ENCODE measurements at regions of chr1 and their contacts with region 1.

Region 1: GRCh38 chr1:25204797-25205480 is 27.4 kb downstream of the SYF2 start:
- DNase-seq: peak in 1 of 2 donors; percentile 26
- ATAC-seq: no peak
- H3K4me3 ChIP-seq: no peak overlapping the region
- H3K27ac ChIP-seq: no peak overlapping the region
- H3K4me1 ChIP-seq: no peaks in the 10 kb centered on the region
- H3K27me3 ChIP-seq: no peaks in the 10 kb centered on the region

Region 2: DNA sequence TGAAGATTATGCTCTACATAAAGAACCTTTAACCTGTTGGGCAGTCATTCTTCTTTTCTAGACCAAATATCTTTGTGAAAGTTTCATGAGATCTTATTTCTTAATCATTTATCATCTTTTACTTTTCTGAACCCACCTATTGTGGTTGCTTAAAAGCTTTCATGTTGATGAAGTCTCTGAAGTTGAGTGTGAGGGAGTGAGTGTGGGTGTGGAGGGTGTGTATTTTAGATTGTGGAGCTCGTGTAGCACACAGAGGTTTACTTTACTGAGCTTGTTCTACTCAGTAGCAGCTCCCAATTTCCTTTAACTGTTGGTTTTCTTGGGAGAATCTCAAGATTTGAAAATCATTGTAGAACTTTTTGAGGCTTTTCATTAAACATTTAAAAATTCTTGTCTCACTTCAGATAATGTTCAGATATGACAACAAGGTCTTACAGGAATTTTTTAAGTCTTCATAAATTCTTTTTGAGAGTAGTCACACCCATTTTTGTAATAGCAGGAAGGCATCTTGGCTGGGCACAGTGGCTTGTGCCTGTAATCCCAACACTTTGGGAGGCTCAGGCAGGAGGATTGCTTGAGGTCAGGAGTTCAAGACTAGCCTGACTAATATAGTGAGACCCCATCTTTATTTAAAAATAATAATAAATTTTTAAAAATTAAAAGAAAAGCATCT is 544.8 kb before region 1 on chr1:
- intact Hi-C with region 1: loop called in 1 of 2 experiments (anchors 10 kb)
- DNase-seq: no peak
- ATAC-seq: no peak
- H3K4me3 ChIP-seq: no peak overlapping the region
- H3K27ac ChIP-seq: no peak overlapping the region
- H3K4me1 ChIP-seq: no peaks in the 10 kb centered on the region
- H3K27me3 ChIP-seq: no peaks in the 10 kb centered on the region

Region 3: DNA sequence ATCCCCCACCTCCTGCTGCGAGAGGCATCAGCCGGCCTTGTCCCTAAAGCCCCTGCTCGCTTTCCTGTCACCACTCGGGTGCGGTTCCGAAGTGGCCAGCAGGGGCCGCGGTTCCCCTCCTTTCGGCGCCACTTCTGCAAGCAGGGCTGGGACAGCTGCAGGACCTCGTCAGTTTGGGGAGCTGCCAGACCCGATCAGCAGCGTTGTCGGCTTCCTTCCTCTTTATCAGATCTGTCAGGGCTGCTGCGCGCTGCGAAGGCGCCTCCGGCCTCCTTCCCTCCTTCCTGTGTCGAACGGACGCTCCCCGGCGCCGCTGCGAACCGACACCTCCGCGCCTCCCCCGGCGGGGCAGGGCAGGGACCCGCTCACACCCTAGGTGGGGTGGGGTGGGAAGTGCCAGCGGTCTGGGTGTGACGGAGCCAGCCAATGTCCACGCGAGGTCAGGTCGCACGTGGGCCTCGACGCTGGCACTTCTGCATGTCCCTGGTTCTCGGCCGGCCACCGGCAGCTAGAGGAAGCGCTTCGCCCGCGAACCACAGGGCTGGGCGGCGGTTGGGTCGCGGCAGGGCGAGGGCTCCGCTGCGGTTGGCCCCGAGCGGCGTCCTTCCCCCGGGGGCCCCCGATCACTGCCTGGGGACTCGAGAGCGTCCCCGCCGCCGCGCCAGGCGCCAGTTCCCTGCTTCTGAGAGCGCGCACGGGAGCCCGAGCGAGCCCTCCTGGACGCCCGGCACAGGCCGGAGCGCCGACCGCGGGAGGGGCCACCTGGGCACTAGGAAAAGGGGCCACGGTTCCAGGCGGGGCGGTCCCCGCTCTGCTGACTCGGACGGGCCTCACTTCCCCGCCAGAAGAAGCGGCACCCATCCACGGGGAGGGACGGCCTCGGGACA is 356.7 kb before region 1 on chr1:
- intact Hi-C with region 1: loop called (anchors 1 to 10 kb)
- DNase-seq: peak; percentile 95 to 96
- ATAC-seq: peak; percentile 95
- H3K4me3 ChIP-seq: peak overlapping the region; percentile 9 to 14
- H3K27ac ChIP-seq: no peak overlapping the region
- H3K4me1 ChIP-seq: no peaks in the 10 kb centered on the region
- H3K27me3 ChIP-seq: no peaks in the 10 kb centered on the region

Region 4: DNA sequence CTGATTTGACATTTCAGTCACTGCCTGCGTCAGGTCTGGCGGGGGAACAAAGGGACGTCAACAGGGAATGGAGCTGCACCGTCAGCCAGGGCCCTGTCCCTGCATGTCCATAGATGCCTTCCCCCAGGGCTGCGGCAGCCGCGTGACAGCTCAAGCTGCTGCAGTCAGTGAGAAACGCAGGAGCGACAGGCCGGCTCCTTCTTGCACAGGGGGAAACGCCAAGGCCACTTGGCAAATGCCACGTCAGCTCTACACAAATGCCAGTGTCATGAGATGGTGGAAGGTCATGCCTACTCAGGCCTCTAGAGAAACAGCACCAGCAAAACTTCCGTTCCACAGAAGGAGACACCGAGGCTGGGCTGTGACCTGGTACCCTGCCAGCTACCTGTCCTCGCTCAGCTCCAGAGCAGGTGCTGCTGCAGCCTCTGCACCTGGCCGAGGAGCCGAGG is 10.3 kb before region 1 on chr1:
- intact Hi-C with region 1: no loop called
- DNase-seq: no peak
- ATAC-seq: no peak
- H3K4me3 ChIP-seq: no peak overlapping the region
- H3K27ac ChIP-seq: no peak overlapping the region
- H3K4me1 ChIP-seq: no peaks in the 10 kb centered on the region
- H3K27me3 ChIP-seq: no peaks in the 10 kb centered on the region

Region 5: GRCh38 chr1:25217598-25218232 is 12.8 kb after region 1 on chr1:
- intact Hi-C with region 1: no loop called
- DNase-seq: no peak
- ATAC-seq: no peak
- H3K4me3 ChIP-seq: no peak overlapping the region
- H3K27ac ChIP-seq: no peak overlapping the region
- H3K4me1 ChIP-seq: no peaks in the 10 kb centered on the region
- H3K27me3 ChIP-seq: no peaks in the 10 kb centered on the region